K562 (cell line): ENCODE measurements at regions of chr1 and their contacts with region 1.

Region 1: DNA sequence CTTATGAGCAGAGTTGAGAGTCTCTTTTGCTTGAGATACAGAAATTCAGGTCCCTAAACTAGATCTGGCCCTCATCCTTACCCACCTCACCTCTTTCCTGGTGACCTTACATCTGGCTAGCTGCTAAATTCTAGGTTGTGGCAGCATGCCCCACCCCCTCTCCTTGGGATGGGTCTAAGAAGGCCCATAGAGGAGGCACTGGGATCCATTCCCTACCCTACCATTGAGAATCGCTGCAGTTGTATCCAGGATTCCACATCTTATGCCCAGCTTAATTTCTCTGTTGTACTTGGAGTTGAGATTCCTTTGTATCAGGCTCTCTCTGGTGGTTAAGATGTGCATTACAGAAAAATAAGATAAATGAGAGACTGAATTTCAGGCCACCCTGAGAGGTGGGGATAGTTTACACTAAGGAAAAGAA is 9.5 kb upstream of the TMEM39B start:
- DNase-seq: peak; percentile 40 to 63 (median 55)
- ATAC-seq: peak; percentile 72
- H3K4me3 ChIP-seq: no peak overlapping the region
- H3K27ac ChIP-seq: no peak overlapping the region
- H3K4me1 ChIP-seq: peaks cover 15 to 27% of the 10 kb centered on the region in 2 experiments
- H3K27me3 ChIP-seq: no peaks in the 10 kb centered on the region
- CTCF ChIP-seq: peak; percentile 60 to 88 (median 76); a peak in 5 of 6 replicates
- EP300 ChIP-seq: no peak
- POLR2A ChIP-seq: 0 out of 2 replicates have a peak, but pooled peaks have one; percentile 54
- RAD21 ChIP-seq: peak; percentile 79 to 86

Region 2: GRCh38 chr1:31815752-31816500 is 247.3 kb before region 1 on chr1 and contains the start of gene SPOCD1:
- CTCF ChIA-PET with region 1: interaction called, 3 read pairs
- POLR2A ChIA-PET with region 1: no interaction called
- in situ Hi-C with region 1: loop called (anchors 10 kb)
- intact Hi-C with region 1: loop called (anchors 10 kb)
- DNase-seq: peak; percentile 97 to 99 (median 98)
- ATAC-seq: peak; percentile 96
- H3K4me3 ChIP-seq: peak within 1 kb of the TSS; percentile 27
- H3K27ac ChIP-seq: peak within 1 kb of the TSS; percentile 24; the same call in 1 of the 3 replicates
- H3K4me1 ChIP-seq: peaks cover 10 to 24% of the 10 kb centered on the region in 2 experiments; a peak in 4 of 5 replicates
- H3K27me3 ChIP-seq: no peaks in the 10 kb centered on the region
- CTCF ChIP-seq: peak; percentile 94 to 100 (median 98)
- EP300 ChIP-seq: no peak; the same call in 1 of the 2 replicates
- POLR2A ChIP-seq: peak; percentile 44; the same call in 1 of the 2 replicates
- RAD21 ChIP-seq: peak; percentile 92 to 96
- polyA plus RNA-seq, gene SPOCD1: 0.03 TPM in 1 of 2 experiments, not detected in the other

Region 3: DNA sequence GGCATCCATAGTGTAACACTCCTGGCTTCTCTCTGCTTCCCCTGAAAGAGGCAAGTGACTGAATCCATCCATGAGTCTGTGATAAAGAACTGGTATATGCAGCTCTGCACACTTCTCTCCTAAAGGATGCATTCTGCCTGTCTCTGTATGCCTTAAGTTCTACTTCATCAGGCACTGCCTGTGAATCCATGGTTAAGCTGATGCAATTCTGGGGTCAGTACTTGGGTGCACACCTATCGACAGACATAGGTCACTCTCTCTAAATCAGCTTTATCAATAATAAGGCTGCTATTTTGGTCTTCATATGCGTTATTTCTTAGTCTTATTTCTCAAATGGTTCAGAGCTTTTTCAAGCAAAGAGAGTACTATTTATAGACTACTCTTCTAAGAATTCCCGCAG is 92.4 kb before region 1 on chr1:
- CTCF ChIA-PET with region 1: no interaction called
- POLR2A ChIA-PET with region 1: no interaction called
- in situ Hi-C with region 1: loop called (anchors 5 kb)
- intact Hi-C with region 1: no loop called
- DNase-seq: no peak
- ATAC-seq: peak; percentile 77
- H3K4me3 ChIP-seq: no peak overlapping the region
- H3K27ac ChIP-seq: no peak overlapping the region
- H3K4me1 ChIP-seq: peaks cover 0 to 3% of the 10 kb centered on the region in 2 experiments; a peak in 3 of 5 replicates
- H3K27me3 ChIP-seq: no peaks in the 10 kb centered on the region
- CTCF ChIP-seq: no peak
- EP300 ChIP-seq: no peak
- POLR2A ChIP-seq: no peak
- RAD21 ChIP-seq: no peak

Region 4: GRCh38 chr1:32045772-32046171 is 17.5 kb before region 1 on chr1:
- CTCF ChIA-PET with region 1: no interaction called
- POLR2A ChIA-PET with region 1: interaction called, 14 read pairs
- in situ Hi-C with region 1: no loop called
- intact Hi-C with region 1: no loop called
- DNase-seq: no peak
- ATAC-seq: no peak
- H3K4me3 ChIP-seq: no peak overlapping the region
- H3K27ac ChIP-seq: no peak overlapping the region
- H3K4me1 ChIP-seq: no peaks in the 10 kb centered on the region
- H3K27me3 ChIP-seq: no peaks in the 10 kb centered on the region
- CTCF ChIP-seq: no peak
- EP300 ChIP-seq: no peak
- POLR2A ChIP-seq: no peak
- RAD21 ChIP-seq: no peak

Region 5: GRCh38 chr1:32413507-32414185 is 350.4 kb after region 1 on chr1:
- CTCF ChIA-PET with region 1: no interaction called
- POLR2A ChIA-PET with region 1: no interaction called
- in situ Hi-C with region 1: no loop called
- intact Hi-C with region 1: loop called (anchors 10 kb)
- DNase-seq: peak; percentile 80 to 96 (median 82)
- ATAC-seq: peak; percentile 99
- H3K4me3 ChIP-seq: no peak overlapping the region
- H3K27ac ChIP-seq: peak overlapping the region; percentile 69
- H3K4me1 ChIP-seq: peaks cover 0 to 7% of the 10 kb centered on the region in 2 experiments; a peak in 3 of 5 replicates
- H3K27me3 ChIP-seq: no peaks in the 10 kb centered on the region
- CTCF ChIP-seq: peak; percentile 87 to 98 (median 93)
- EP300 ChIP-seq: no peak
- POLR2A ChIP-seq: no peak
- RAD21 ChIP-seq: peak; percentile 93 to 99